Activated CD4-positive, alpha-beta T cell treated with anti-CD3 and anti-CD28 coated beads, Interleukin-2, amount 10 ng/mL, durations not matched to agents 7 days and 5 days (primary cell): ENCODE measurements at regions of chr14 and their contacts with region 1.

Region 1: GRCh38 chr14:61602003-61602732 is 93.1 kb upstream of the HIF1A start:
- DNase-seq: no peak
- H3K4me3 Mint-ChIP-seq: no peak overlapping the region
- H3K27ac Mint-ChIP-seq: no peak overlapping the region
- H3K4me1 Mint-ChIP-seq: peaks cover 14% of the 10 kb centered on the region
- H3K27me3 Mint-ChIP-seq: no peaks in the 10 kb centered on the region

Region 2: GRCh38 chr14:61588419-61588901 is 13.7 kb before region 1 on chr14:
- CTCF ChIA-PET with region 1: interaction called, 12 read pairs
- POLR2A ChIA-PET with region 1: no interaction called
- DNase-seq: no peak
- H3K4me3 Mint-ChIP-seq: no peak overlapping the region
- H3K27ac Mint-ChIP-seq: no peak overlapping the region
- H3K4me1 Mint-ChIP-seq: peaks cover 49% of the 10 kb centered on the region
- H3K27me3 Mint-ChIP-seq: peaks cover 3% of the 10 kb centered on the region